ENCODE measurements at regions of chr18 and their contacts with region 1.

Region 1: GRCh38 chr18:10851824-10852319 is 297.5 kb downstream of the PIEZO2 start:
- DNase-seq: no peak
- H3K4me3 ChIP-seq: no peak overlapping the region
- H3K27ac ChIP-seq: no peak overlapping the region
- H3K4me1 ChIP-seq: no peaks in the 10 kb centered on the region
- H3K27me3 ChIP-seq: no peaks in the 10 kb centered on the region
- CTCF ChIP-seq: peak; percentile 72

Region 2: DNA sequence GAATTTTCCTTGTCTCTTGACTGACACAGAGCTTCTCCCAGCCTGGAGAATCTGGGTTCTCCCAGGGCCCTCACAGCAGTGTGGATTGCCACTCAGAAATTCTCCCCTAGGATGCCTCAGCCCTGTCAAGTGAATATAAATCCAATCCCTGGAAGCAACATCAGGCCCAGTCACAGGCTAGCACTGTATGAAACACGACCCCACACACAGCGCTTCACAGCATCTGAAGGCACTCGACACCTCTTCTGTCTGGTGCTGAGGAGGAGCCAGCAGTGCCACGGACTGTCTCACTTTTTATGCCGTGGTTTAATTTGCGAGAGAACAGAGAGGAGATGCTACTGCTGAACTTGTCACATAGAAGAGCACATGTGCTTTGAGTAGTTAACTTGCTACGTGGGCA is 161.5 kb before region 1 on chr18:
- intact Hi-C with region 1: no loop called
- DNase-seq: no peak
- H3K4me3 ChIP-seq: no peak overlapping the region
- H3K27ac ChIP-seq: no peak overlapping the region
- H3K4me1 ChIP-seq: no peaks in the 10 kb centered on the region
- H3K27me3 ChIP-seq: no peaks in the 10 kb centered on the region
- CTCF ChIP-seq: no peak

Region 3: GRCh38 chr18:11047156-11047555 is 195.3 kb after region 1 on chr18:
- intact Hi-C with region 1: loop called (anchors 2 kb)
- DNase-seq: no peak
- H3K4me3 ChIP-seq: no peak overlapping the region
- H3K27ac ChIP-seq: no peak overlapping the region
- H3K4me1 ChIP-seq: no peaks in the 10 kb centered on the region
- H3K27me3 ChIP-seq: no peaks in the 10 kb centered on the region
- CTCF ChIP-seq: no peak

Region 4: GRCh38 chr18:11155034-11155759 is 303.3 kb after region 1 on chr18:
- intact Hi-C with region 1: loop called (anchors 5 kb)
- DNase-seq: no peak
- H3K4me3 ChIP-seq: no peak overlapping the region
- H3K27ac ChIP-seq: no peak overlapping the region
- H3K4me1 ChIP-seq: no peaks in the 10 kb centered on the region
- H3K27me3 ChIP-seq: peaks cover 1% of the 10 kb centered on the region
- CTCF ChIP-seq: no peak

Region 5: GRCh38 chr18:11553098-11553940 is 701.4 kb after region 1 on chr18:
- intact Hi-C with region 1: loop called (anchors 10 kb)
- DNase-seq: peak; percentile 24
- H3K4me3 ChIP-seq: no peak overlapping the region
- H3K27ac ChIP-seq: no peak overlapping the region
- H3K4me1 ChIP-seq: no peaks in the 10 kb centered on the region
- H3K27me3 ChIP-seq: no peaks in the 10 kb centered on the region
- CTCF ChIP-seq: peak; percentile 82